ENCODE measurements at regions of chr2 and their contacts with region 1.

Region 1: DNA sequence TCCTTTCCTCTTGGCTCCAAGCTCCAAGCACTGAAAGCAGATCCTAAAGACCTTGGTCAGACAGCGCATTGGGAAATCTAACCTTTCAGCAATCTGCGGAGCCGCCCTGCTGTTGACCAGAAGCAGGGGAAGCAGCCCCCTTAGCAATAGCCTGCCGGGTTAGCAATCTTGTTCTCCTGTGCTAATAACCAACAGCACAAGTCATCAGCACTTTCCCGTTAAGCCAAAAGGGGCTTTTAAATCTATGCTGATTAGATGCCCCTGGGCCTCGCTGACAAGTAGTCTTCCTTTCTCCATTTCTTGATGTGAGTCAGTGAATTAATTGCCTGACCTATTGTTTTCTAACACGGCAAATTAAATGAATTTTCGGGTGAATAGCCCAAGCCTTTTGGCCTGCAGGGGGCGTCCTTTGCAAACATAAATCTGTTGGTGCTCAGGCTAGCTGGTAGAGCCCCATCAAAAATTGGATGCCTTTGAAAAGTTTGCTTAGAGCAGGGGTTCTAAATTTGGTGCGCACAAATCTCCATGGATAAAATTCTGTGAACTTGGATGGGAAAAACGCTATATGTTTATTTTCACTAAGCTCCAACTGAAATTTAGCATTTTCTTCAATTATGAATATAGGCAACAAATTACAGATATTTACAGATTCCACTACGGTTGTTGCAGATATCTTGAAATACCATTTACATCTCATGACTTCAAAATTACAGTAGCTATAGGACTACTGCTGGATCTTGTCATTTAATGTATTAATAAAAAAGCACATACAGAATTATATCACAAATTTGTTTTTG is 24.6 kb downstream of the MAIP1 start:
- DNase-seq: peak; percentile 91
- H3K4me3 ChIP-seq: peak overlapping the region in 2 of 3 experiments; percentile 8 to 9
- H3K27ac ChIP-seq: no peak overlapping the region
- H3K4me1 ChIP-seq: peaks cover 9% of the 10 kb centered on the region
- H3K27me3 ChIP-seq: no peaks in the 10 kb centered on the region
- CTCF ChIP-seq: peak; percentile 66 to 92
- POLR2A ChIP-seq: no peak

Region 2: DNA sequence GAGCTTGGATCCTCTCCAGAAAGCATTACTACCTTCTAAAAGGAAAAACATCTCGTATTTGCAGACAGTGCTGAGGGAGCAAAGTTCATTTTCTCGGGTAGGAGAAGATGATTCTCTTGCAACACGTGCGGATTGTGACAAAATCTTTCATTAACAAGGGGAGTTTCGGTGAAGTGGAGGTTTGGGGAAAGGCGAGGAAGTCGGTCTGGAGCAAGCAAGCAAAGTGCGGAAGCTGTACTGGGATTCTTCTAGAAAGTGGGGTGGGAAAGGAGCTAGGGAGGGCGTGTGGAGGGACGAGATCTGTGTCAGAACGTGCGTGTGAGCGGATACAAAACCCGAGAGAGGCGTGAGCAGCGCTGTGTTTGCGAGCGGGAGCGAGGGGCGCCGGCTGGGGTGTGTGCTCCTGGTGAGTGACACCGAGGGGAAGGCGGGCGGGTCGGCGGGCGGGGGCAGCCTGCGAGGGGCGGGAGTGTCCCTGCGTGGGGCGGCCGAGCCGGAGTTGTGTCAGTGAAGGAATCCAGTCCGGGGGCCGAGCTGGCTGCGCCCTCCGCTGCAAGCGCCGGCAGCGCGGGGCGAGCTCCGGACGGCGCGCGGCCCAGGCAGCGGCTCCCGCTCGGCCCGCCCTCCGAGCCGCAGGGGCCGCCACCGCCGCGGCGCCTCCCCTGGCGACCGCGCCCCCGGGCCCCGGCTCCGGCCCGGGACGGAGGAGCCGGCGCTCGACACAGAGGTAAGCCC is 326.3 kb after region 1 on chr2 and contains the start of gene SPATS2L:
- CTCF ChIA-PET with region 1: interaction called, 8 read pairs
- POLR2A ChIA-PET with region 1: no interaction called
- dilution Hi-C with region 1: no loop called
- intact Hi-C with region 1: loop called (anchors 2 kb)
- DNase-seq: peak; percentile 71
- H3K4me3 ChIP-seq: peak within 1 kb of the TSS; percentile 83 to 95 (median 93)
- H3K27ac ChIP-seq: peak within 1 kb of the TSS; percentile 39
- H3K4me1 ChIP-seq: peaks cover 14% of the 10 kb centered on the region
- H3K27me3 ChIP-seq: no peaks in the 10 kb centered on the region
- CTCF ChIP-seq: no peak
- POLR2A ChIP-seq: peak; percentile 74
- total RNA-seq, gene SPATS2L: 63.8 and 72.9 TPM in 2 replicates

Region 3: GRCh38 chr2:200471324-200471848 is 491.4 kb after region 1 on chr2:
- CTCF ChIA-PET with region 1: interaction called, 10 read pairs
- POLR2A ChIA-PET with region 1: no interaction called
- dilution Hi-C with region 1: no loop called
- intact Hi-C with region 1: loop called (anchors 1 kb)
- DNase-seq: peak; percentile 21
- H3K4me3 ChIP-seq: no peak overlapping the region
- H3K27ac ChIP-seq: no peak overlapping the region
- H3K4me1 ChIP-seq: no peaks in the 10 kb centered on the region
- H3K27me3 ChIP-seq: no peaks in the 10 kb centered on the region
- CTCF ChIP-seq: peak; percentile 30 to 45
- POLR2A ChIP-seq: no peak

Region 4: GRCh38 chr2:200525882-200526651 is 546.0 kb after region 1 on chr2 and contains the start of gene SGO2:
- CTCF ChIA-PET with region 1: interaction called, 3 read pairs
- POLR2A ChIA-PET with region 1: no interaction called
- dilution Hi-C with region 1: no loop called
- intact Hi-C with region 1: loop called (anchors 1 kb)
- DNase-seq: peak; percentile 95
- H3K4me3 ChIP-seq: peak within 1 kb of the TSS; percentile 66 to 83 (median 67)
- H3K27ac ChIP-seq: peak within 1 kb of the TSS; percentile 8
- H3K4me1 ChIP-seq: peaks cover 8% of the 10 kb centered on the region
- H3K27me3 ChIP-seq: peaks cover 17 to 19% of the 10 kb centered on the region in 2 experiments
- CTCF ChIP-seq: no peak
- POLR2A ChIP-seq: peak; percentile 90
- total RNA-seq, gene SGO2: 19.7 and 20.5 TPM in 2 replicates

Region 5: GRCh38 chr2:200811336-200812121 is 831.5 kb after region 1 on chr2 and contains the start of gene BZW1:
- CTCF ChIA-PET with region 1: no interaction called
- POLR2A ChIA-PET with region 1: no interaction called
- dilution Hi-C with region 1: no loop called
- intact Hi-C with region 1: loop called (anchors 5 kb)
- DNase-seq: peak; percentile 95
- H3K4me3 ChIP-seq: peak within 1 kb of the TSS; percentile 76 to 99 (median 96)
- H3K27ac ChIP-seq: peak within 1 kb of the TSS; percentile 98
- H3K4me1 ChIP-seq: peaks cover 34% of the 10 kb centered on the region
- H3K27me3 ChIP-seq: no peaks in the 10 kb centered on the region
- CTCF ChIP-seq: no peak
- POLR2A ChIP-seq: peak; percentile 69
- total RNA-seq, gene BZW1: 347 and 353 TPM in 2 replicates

Measured in endothelial cell of umbilical vein (primary cell).